K562 (cell line): ENCODE measurements at regions of chr12 and their contacts with region 1.

Region 1: GRCh38 chr12:24778486-24779304 is 170.2 kb downstream of the BCAT1 start:
- DNase-seq: peak; percentile 49 to 68 (median 64)
- ATAC-seq: peak; percentile 85
- H3K4me3 ChIP-seq: no peak overlapping the region
- H3K27ac ChIP-seq: no peak overlapping the region
- H3K4me1 ChIP-seq: no peaks in the 10 kb centered on the region
- H3K27me3 ChIP-seq: no peaks in the 10 kb centered on the region; a peak in 1 of 5 replicates
- CTCF ChIP-seq: peak; percentile 36 to 73 (median 38); a peak in 3 of 6 replicates
- EP300 ChIP-seq: no peak
- POLR2A ChIP-seq: no peak
- RAD21 ChIP-seq: peak; percentile 78 to 93

Region 2: GRCh38 chr12:22856178-22856577 is 1922.5 kb before region 1 on chr12:
- CTCF ChIA-PET with region 1: interaction called, 3 read pairs
- POLR2A ChIA-PET with region 1: no interaction called
- in situ Hi-C with region 1: loop called (anchors 5 kb)
- intact Hi-C with region 1: no loop called
- DNase-seq: peak; percentile 12 to 30 (median 15)
- ATAC-seq: no peak
- H3K4me3 ChIP-seq: no peak overlapping the region
- H3K27ac ChIP-seq: no peak overlapping the region
- H3K4me1 ChIP-seq: no peaks in the 10 kb centered on the region
- H3K27me3 ChIP-seq: no peaks in the 10 kb centered on the region
- CTCF ChIP-seq: peak; percentile 33 to 72 (median 35); a peak in 4 of 6 replicates
- EP300 ChIP-seq: no peak
- POLR2A ChIP-seq: no peak
- RAD21 ChIP-seq: peak; percentile 79 to 88

Region 3: DNA sequence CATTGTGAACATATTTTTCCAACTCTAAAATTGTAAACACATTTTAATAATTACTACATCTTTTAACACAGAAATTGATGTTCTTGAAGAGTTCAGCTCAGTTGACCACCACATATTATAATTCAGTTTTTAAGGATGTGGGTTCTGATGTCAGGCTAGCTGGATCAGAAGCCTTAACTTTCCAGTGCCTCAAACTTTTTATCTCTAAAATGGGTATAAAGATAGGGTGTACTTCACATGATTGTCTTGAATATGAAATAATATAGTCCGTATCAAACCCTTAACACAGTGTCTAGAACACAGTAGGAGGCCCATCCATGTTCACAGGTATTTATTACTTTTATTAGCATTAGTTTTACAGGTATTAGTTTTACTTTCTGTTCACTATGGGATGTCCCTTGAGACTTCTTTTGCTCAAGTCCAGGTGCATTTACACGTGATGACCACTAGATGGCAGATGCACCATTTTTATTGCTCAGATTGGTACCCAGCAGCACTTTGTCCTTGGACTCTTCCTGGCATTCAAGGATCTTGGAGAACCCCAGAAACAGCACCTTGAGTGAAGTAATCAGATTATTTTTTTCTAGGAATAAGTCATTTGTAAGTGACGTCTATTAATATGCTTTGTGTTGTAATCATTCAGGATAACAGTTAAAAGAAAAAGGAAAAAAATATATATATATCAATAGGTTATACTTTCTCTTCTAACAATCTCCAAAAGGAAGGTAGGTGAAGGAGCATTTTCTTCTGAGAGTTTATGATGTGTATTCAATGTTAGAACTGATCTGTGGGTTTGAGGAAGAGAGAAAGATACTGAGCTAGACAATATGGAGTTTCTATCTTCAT is 1573.5 kb before region 1 on chr12:
- CTCF ChIA-PET with region 1: interaction called, 3 read pairs
- POLR2A ChIA-PET with region 1: no interaction called
- in situ Hi-C with region 1: no loop called
- intact Hi-C with region 1: loop called (anchors 5 kb)
- DNase-seq: peak; percentile 56 to 68 (median 65)
- ATAC-seq: peak; percentile 84
- H3K4me3 ChIP-seq: no peak overlapping the region
- H3K27ac ChIP-seq: no peak overlapping the region
- H3K4me1 ChIP-seq: no peaks in the 10 kb centered on the region
- H3K27me3 ChIP-seq: no peaks in the 10 kb centered on the region
- CTCF ChIP-seq: peak; percentile 66 to 80 (median 75)
- EP300 ChIP-seq: no peak
- POLR2A ChIP-seq: no peak
- RAD21 ChIP-seq: peak; percentile 84 to 90

Region 4: GRCh38 chr12:24109381-24110039 is 669.2 kb before region 1 on chr12:
- CTCF ChIA-PET with region 1: no interaction called
- POLR2A ChIA-PET with region 1: no interaction called
- in situ Hi-C with region 1: loop called (anchors 25 kb)
- intact Hi-C with region 1: loop called (anchors 10 kb)
- DNase-seq: peak in 2 of 4 experiments; percentile 13 to 18
- ATAC-seq: no peak
- H3K4me3 ChIP-seq: no peak overlapping the region
- H3K27ac ChIP-seq: no peak overlapping the region
- H3K4me1 ChIP-seq: no peaks in the 10 kb centered on the region
- H3K27me3 ChIP-seq: no peaks in the 10 kb centered on the region
- CTCF ChIP-seq: peak; percentile 2 to 44 (median 39); a peak in 2 of 6 replicates
- EP300 ChIP-seq: no peak
- POLR2A ChIP-seq: no peak
- RAD21 ChIP-seq: peak in 1 of 2 experiments; percentile 49; a peak in 3 of 4 replicates

Region 5: DNA sequence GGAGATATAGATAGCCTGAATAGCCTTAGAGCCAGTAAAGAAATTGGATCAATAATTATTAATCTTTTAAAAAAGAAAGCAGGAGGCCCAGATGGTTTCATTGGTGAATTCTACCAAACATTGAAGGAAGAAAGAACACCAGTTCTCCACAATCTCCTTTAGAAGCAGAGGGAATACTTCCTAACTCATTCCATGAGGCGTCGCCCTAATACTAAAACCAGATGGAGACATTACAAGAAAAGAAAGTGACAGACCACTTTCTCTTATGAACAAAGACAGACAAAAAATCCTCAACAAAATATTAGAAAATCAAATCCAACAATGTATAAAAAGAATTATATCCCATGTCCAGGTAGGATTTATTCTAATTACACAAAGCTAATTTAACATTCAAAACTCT is 192.4 kb before region 1 on chr12:
- CTCF ChIA-PET with region 1: interaction called, 7 read pairs
- POLR2A ChIA-PET with region 1: no interaction called
- in situ Hi-C with region 1: loop called (anchors 10 kb)
- intact Hi-C with region 1: loop called (anchors 1 kb)
- DNase-seq: peak in 1 of 4 experiments; percentile 23
- ATAC-seq: no peak
- H3K4me3 ChIP-seq: no peak overlapping the region
- H3K27ac ChIP-seq: no peak overlapping the region
- H3K4me1 ChIP-seq: no peaks in the 10 kb centered on the region; a peak in 1 of 5 replicates
- H3K27me3 ChIP-seq: no peaks in the 10 kb centered on the region; a peak in 1 of 5 replicates
- CTCF ChIP-seq: peak; percentile 22 to 60 (median 34); a peak in 3 of 6 replicates
- EP300 ChIP-seq: no peak
- POLR2A ChIP-seq: no peak
- RAD21 ChIP-seq: peak; percentile 25 to 69

Region 6: DNA sequence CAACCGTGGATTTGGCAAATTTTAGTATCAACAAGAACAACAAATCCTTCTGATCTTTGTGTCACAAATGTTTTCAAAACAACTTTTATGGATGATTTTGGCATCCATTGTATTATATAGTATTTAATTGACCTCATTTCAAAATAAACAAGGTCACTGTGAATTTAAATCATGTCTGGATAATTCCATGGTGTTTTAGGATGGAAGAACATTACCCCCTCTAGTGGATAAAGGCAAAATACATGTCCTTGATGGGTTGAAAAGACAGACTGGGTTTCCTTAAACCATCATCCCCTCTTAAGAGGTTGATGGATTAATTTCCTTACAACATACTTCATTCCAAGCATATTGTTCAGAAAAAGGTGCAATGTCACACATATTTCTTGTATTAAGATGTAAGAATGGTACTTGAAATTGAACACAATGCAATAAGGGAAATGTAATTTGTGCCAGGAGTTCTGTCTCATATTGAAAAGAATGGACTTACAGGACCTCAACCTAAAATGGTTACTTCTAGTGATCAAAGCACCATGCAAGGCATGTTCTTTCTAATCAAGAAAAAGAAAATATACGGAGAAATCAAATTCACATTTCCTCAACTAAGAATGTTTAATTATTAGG is 181.8 kb before region 1 on chr12:
- CTCF ChIA-PET with region 1: interaction called, 3 read pairs
- POLR2A ChIA-PET with region 1: no interaction called
- in situ Hi-C with region 1: loop called (anchors 10 kb)
- intact Hi-C with region 1: no loop called
- DNase-seq: peak; percentile 13 to 39 (median 20)
- ATAC-seq: peak; percentile 57; the same call in 1 of the 3 replicates
- H3K4me3 ChIP-seq: no peak overlapping the region
- H3K27ac ChIP-seq: no peak overlapping the region
- H3K4me1 ChIP-seq: no peaks in the 10 kb centered on the region
- H3K27me3 ChIP-seq: no peaks in the 10 kb centered on the region
- CTCF ChIP-seq: peak; percentile 37 to 59 (median 46); a peak in 5 of 6 replicates
- EP300 ChIP-seq: no peak
- POLR2A ChIP-seq: no peak
- RAD21 ChIP-seq: peak; percentile 44 to 64

Region 7: DNA sequence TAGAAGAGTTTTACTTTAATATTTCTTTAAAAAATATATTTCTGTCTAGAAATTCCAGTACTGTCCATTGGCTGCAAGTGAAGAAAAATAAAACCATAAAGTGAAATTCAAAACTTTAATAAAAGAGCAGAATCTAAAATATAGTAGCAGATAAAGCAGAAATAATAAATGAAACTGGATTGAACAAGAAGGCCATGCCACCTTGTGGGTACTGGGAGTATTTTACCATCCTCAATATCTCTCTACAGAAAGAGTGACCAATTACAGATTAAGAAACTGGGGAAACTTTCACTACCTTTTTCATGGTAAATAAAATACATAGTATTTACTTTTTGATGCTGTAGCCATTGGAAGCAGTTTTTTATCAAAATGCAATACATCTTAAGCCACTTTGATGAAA is 50.3 kb before region 1 on chr12:
- CTCF ChIA-PET with region 1: no interaction called
- POLR2A ChIA-PET with region 1: no interaction called
- in situ Hi-C with region 1: no loop called
- intact Hi-C with region 1: loop called (anchors 5 kb)
- DNase-seq: peak in 1 of 4 experiments; percentile 35
- ATAC-seq: 0 out of 3 replicates have a peak, but pooled peaks have one; percentile 55
- H3K4me3 ChIP-seq: no peak overlapping the region
- H3K27ac ChIP-seq: no peak overlapping the region
- H3K4me1 ChIP-seq: no peaks in the 10 kb centered on the region
- H3K27me3 ChIP-seq: no peaks in the 10 kb centered on the region
- CTCF ChIP-seq: peak in 1 of 3 experiments; percentile 65; a peak in 3 of 6 replicates
- EP300 ChIP-seq: no peak
- POLR2A ChIP-seq: no peak
- RAD21 ChIP-seq: peak; percentile 33 to 77; a peak in 3 of 4 replicates